Lower leg skin (tissue), 4 donors: ENCODE measurements at regions of chr7 and their contacts with region 1.

Region 1: GRCh38 chr7:123682690-123683089 is 27.0 kb downstream of the LMOD2 start:
- DNase-seq: no peak
- H3K4me3 ChIP-seq: no peak overlapping the region
- CTCF ChIP-seq: no peak
- POLR2A ChIP-seq: no peak

Region 2: DNA sequence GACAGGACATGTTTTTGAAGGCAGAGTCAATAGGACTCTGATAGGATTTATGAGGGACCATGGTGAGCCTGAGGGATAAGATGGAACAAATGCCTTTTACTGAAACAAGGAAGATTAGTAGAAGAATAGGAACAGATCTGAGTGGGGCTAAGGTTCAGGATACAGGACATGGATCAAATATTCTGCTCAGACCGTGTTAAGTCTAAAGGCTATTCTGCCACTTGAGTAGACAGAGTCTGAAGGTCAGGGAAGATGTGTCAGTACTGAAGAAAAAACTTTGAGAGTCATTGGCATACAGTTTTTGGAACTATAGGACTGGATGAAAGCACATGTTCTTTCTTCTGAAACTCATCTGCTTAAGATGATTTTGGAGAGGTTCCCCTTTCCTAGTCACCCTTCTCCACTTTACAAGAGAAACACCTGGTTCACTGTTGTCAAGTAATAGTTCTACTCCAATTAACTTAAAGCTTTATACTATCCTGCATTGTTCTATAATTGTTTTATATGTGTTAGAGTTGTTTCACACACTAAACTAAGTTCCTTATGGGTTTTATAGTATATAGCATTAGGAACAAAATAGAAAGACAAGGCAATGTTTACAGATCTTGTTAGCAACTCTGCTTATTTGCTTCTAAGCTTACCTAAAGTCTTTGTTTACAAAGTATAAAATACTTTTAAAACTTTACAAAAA is 22.7 kb after region 1 on chr7:
- intact Hi-C with region 1: no loop called
- DNase-seq: no peak
- H3K4me3 ChIP-seq: no peak overlapping the region
- CTCF ChIP-seq: no peak
- POLR2A ChIP-seq: no peak

Region 3: DNA sequence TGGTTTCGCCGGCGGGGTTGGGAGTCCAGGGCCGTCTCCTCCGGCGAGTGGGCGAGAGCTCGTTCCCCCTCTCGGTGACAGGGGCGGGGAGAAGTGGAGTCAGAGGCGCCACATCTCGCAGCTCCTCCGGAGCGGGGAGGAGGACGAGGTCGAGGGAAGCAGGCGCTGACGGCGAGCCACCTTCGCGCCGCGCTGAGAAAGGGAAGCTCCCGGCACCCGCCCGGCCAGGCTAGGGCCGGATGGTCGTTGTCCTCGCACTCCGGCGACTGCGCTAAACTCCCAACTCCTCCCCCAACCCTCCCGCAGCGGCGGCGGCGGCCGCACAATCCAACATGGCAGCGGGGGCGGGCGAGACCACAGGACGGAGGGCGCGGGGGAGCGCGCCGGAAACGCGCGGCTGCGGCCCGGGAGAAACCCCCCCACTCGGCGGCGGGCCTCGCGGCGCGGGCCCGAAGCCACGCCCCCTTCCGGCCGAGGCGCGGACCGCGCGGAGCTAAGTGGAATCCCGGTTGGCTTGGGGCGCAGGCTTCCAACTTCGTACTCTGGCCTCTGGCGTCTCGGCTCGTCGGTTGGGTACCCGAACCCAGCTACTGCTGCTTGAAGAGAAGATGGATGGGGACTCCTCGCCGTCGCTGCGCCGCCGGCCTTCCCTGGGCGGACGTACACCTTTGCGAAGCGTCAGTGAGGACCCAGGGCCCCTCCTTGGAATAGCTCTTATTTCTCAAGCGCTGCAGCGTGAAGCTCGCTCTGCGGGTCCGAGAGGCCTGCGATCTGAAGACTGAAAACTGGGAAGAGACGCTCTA is 66.2 kb after region 1 on chr7 and contains the start of gene WASL:
- intact Hi-C with region 1: loop called (anchors 10 kb)
- DNase-seq: peak; percentile 85 to 98
- H3K4me3 ChIP-seq: peak within 1 kb of the TSS; percentile 97
- CTCF ChIP-seq: peak in 1 of 3 donors; percentile 9
- POLR2A ChIP-seq: peak in 1 of 2 donors; percentile 86
- total RNA-seq, gene WASL: 30.4 to 41.4 (median 34.2) TPM

Region 4: DNA sequence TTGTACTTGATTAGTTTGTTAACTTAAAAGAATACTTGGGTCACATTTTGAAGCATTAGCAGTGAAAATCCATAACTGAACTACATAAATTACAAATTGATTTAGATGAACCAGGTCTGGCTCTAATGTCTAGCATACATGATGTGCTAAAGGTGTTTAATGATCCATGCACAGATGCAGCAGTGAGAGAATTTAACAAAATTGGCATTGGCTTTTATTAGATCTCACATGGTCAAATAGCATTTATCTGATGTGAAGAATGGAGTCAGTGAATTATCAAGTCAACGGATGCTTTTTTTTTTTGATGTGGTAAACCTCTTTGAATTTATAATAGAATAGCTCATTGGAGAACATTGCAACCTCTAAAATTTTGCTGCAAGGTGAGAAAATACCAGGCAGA is 1539.9 kb after region 1 on chr7:
- intact Hi-C with region 1: no loop called
- DNase-seq: no peak
- H3K4me3 ChIP-seq: no peak overlapping the region
- CTCF ChIP-seq: no peak
- POLR2A ChIP-seq: no peak